Activated T-helper 1 cell treated with anti-CD3 and anti-CD28 coated beads, Interleukin-12 subunit alpha, Interleukin-12 subunit beta, Interleukin-2, Interleukin-4 antibody, amounts not matched to agents 30 ng/mL and 10 ng/mL and 1 ng/mL, durations not matched to agents 14 hours and 24 hours and 36 hours (primary cell): ENCODE measurements at regions of chr2 and their contacts with region 1.

Region 1: DNA sequence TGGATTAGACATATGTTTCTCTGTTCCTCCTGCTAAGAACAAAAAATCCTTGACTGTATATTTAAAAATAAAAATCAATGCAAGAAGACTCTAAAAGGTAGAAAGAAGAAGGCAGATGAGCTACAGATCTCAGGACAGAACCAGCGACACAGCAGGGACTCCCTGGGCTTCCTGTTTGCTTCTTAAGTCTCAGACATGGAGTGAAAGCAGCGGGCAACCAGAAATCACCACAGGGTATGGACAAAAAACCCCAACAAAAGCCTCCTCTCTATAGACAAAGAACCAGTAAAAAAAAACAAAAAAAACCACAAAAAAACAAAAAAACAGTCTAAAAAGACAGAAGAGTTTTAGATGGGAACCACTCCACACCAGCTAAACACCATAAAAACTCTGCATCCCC is 971.0 kb upstream of the GYPC start:
- DNase-seq: no peak
- H3K4me3 Mint-ChIP-seq: no peak overlapping the region
- H3K27ac Mint-ChIP-seq: no peak overlapping the region
- H3K4me1 Mint-ChIP-seq: no peaks in the 10 kb centered on the region
- H3K27me3 Mint-ChIP-seq: no peaks in the 10 kb centered on the region

Region 2: DNA sequence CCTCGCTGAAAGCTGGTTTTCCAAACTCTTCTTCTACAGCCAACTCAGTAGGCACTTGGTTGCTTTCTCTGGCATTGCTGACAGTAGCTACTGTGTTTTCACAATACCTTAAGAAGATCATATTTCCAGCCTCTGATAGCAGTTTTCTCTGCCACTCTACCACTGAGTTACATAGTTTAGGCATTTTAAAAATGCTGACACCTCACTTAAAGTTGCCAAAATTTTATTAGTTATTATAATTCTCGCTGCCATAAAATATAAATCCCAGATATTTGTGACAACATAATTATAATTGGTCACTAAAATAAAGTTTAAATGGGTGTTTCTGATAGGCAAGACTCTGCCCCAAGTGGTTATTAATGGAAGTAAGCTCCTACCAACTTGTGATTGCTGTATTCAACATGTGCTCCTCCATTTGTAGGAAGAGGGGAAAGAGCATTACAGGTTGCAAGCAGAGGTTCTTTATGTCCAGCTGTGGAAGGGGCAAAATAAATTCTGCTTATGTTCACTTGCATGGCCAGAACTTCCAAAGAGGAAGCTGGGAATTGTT is 457.0 kb before region 1 on chr2:
- intact Hi-C with region 1: no loop called
- DNase-seq: no peak
- H3K4me3 Mint-ChIP-seq: no peak overlapping the region
- H3K27ac Mint-ChIP-seq: no peak overlapping the region
- H3K4me1 Mint-ChIP-seq: no peaks in the 10 kb centered on the region
- H3K27me3 Mint-ChIP-seq: no peaks in the 10 kb centered on the region

Region 3: DNA sequence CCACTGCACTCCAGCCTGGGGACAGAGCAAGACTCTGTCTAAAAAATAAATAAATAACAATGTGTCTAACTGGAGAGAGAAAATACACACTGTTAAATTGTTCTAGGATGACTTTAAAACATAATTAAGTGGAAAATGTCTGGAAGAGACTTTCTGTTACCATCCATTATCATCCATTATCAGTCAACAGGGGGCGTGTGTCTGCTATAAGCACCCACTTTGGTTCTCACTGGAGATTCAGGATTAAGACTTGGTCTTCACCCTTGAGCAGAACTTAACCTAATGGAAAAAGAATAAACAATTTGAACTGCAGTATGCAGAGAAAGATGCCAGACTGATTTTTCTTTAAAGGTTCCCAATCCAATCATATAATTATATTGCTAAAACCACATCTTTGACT is 28.7 kb before region 1 on chr2:
- intact Hi-C with region 1: no loop called
- DNase-seq: no peak
- H3K4me3 Mint-ChIP-seq: no peak overlapping the region
- H3K27ac Mint-ChIP-seq: no peak overlapping the region
- H3K4me1 Mint-ChIP-seq: no peaks in the 10 kb centered on the region
- H3K27me3 Mint-ChIP-seq: no peaks in the 10 kb centered on the region

Region 4: DNA sequence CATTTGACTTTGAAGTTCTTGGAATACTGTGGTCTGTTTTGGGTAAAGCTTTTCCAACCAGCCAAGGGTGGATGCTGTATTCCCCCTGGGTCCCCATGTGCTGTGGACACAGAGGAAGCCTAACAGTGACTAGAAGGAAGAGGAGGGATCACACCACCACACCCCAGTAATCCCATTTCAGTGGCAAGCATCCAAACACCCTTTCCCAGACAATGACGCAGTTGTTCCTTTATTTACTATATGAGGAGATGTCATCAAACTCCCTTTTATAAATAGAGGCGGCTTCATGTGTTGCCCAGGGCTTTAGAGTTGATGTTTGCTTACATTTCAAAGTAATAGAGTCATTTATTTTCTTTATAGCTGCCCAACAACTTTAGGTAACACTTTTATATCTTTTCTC is 11.6 kb after region 1 on chr2:
- intact Hi-C with region 1: loop called (anchors 1 kb)
- DNase-seq: no peak
- H3K4me3 Mint-ChIP-seq: no peak overlapping the region
- H3K27ac Mint-ChIP-seq: no peak overlapping the region
- H3K4me1 Mint-ChIP-seq: no peaks in the 10 kb centered on the region
- H3K27me3 Mint-ChIP-seq: no peaks in the 10 kb centered on the region